CD8-positive, alpha-beta T cell (primary cell): ENCODE measurements at regions of chr4 and their contacts with region 1.

Region 1: DNA sequence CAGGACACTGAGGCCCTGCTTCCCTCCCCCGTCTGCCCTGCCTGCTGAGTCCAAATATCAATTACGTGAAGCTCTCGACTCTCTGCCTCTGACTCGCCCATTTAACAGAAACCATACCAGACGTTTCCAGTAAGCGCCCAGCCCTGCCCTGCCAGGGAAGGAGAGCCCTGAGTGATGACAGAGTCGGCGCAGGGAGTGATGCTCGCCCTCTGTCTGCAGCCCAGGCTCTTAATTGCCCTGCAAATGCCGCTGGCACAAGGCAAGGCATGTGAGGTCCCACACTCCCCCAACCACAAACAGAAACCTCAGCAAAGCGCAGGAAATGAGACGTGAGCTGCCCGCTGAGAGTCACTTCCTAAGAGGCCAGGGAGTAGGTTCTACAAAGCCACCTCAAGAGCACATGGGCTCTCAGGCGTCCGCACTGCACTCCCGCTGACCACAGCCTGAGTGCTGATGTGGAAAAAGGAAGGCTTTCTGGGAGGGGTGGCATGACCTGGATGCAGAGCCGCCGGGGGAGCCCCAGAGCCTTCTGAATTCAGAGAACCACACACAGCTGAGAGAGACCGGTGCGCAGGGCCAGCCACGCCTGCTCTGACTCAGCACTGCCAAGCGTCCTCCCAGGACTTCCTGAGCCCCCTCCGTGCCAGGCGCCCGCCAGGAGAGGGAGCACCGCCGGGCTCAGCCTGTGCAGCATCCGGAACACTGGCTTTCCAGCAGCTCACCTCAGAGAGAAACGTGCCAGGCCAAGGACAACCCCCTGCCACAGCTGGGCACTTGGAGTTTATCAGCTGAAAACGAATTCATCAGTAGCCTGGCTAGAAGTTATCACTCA is 5.3 kb downstream of the ZFYVE28 start:
- DNase-seq: peak; percentile 71 to 98 (median 86)
- ATAC-seq: peak; percentile 77
- H3K4me3 ChIP-seq: peak overlapping the region; percentile 25 to 38
- H3K4me3 Mint-ChIP-seq: peak overlapping the region; percentile 73
- H3K27ac ChIP-seq: peak overlapping the region; percentile 87 to 91
- H3K27ac Mint-ChIP-seq: peak overlapping the region; percentile 97
- H3K4me1 ChIP-seq: peaks cover 62% of the 10 kb centered on the region
- H3K4me1 Mint-ChIP-seq: peaks cover 68% of the 10 kb centered on the region
- H3K27me3 ChIP-seq: peaks cover 4 to 7% of the 10 kb centered on the region in 2 experiments
- H3K27me3 Mint-ChIP-seq: peaks cover 4% of the 10 kb centered on the region
- CTCF ChIP-seq: peak; percentile 31

Region 2: DNA sequence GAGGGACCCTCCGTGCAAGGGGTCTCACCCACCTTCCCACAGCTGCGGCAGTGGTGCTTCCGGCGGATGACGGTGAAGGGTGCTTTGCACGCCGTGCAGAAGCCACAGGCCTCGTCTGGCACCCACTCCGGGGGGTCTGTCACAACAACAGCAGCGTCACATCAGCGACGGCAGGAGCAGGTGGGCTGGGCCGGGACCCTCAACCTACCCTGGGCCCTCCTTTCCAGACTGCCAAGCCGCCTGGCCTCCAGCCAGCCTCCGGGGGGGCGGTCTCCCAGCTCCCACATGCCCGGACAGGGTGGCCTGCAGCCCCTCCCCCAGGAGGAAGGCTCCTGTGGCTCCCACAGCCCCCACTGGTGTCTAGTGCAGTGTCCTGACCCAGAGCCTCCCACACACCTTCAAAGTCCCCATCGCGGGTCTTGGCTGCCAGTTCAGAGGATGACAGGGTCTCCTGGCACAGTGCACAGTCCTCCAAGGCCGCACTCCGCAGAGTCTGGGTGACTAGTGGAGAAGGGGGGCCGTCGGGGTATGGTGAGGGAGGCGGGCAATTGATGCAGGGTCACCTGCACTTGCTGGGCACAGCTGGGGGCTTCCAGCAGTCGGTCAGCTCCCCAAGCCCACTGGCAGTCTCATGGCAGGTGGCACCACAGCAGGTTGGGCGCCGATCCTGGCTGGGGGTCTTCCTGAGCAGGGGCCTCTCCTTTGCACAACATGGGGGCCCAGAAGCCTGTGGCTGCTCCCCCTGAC is 141.6 kb before region 1 on chr4:
- CTCF ChIA-PET with region 1: no interaction called
- POLR2A ChIA-PET with region 1: no interaction called
- intact Hi-C with region 1: no loop called
- DNase-seq: peak in 1 of 9 experiments; percentile 16
- ATAC-seq: no peak
- H3K4me3 ChIP-seq: no peak overlapping the region
- H3K4me3 Mint-ChIP-seq: no peak overlapping the region
- H3K27ac ChIP-seq: no peak overlapping the region
- H3K27ac Mint-ChIP-seq: no peak overlapping the region
- H3K4me1 ChIP-seq: no peaks in the 10 kb centered on the region
- H3K4me1 Mint-ChIP-seq: peaks cover 2% of the 10 kb centered on the region
- H3K27me3 ChIP-seq: no peaks in the 10 kb centered on the region
- H3K27me3 Mint-ChIP-seq: no peaks in the 10 kb centered on the region
- CTCF ChIP-seq: no peak

Region 3: GRCh38 chr4:2281575-2282343 is 131.3 kb before region 1 on chr4:
- CTCF ChIA-PET with region 1: interaction called, 3 read pairs
- POLR2A ChIA-PET with region 1: interaction called, 10 read pairs
- intact Hi-C with region 1: loop called (anchors 1 to 2 kb)
- DNase-seq: peak; percentile 73 to 98 (median 85)
- ATAC-seq: peak; percentile 83
- H3K4me3 ChIP-seq: peak overlapping the region in 1 of 2 experiments; percentile 30
- H3K4me3 Mint-ChIP-seq: peak overlapping the region; percentile 78
- H3K27ac ChIP-seq: peak overlapping the region; percentile 67 to 94
- H3K27ac Mint-ChIP-seq: peak overlapping the region; percentile 99
- H3K4me1 ChIP-seq: peaks cover 46% of the 10 kb centered on the region
- H3K4me1 Mint-ChIP-seq: peaks cover 41% of the 10 kb centered on the region
- H3K27me3 ChIP-seq: no peaks in the 10 kb centered on the region
- H3K27me3 Mint-ChIP-seq: no peaks in the 10 kb centered on the region
- CTCF ChIP-seq: peak; percentile 72

Region 4: DNA sequence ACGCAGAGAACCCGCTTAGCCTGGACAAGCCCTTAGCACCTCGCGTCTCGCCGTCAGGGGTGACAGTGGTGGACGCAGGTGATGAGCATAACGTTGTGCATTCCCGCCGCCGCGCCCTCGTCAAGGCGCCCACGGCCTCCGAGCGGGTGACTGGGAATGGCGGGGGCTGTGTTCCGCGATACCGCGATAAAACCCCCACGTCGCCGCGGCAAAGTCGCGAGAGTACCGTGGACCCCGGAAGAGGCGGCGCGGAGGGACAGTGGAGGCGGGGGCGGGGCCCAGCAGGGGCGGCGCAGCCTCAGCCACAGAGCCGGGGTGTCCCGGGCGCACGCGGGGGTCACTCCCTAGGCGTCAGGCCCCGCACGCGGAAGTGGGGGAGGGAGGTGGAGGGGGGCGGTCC is 48.4 kb before region 1 on chr4:
- CTCF ChIA-PET with region 1: no interaction called
- POLR2A ChIA-PET with region 1: interaction called, 3 read pairs
- intact Hi-C with region 1: loop called (anchors 2 kb)
- DNase-seq: peak; percentile 32 to 83 (median 60)
- ATAC-seq: peak; percentile 85
- H3K4me3 ChIP-seq: peak overlapping the region; percentile 69 to 74
- H3K4me3 Mint-ChIP-seq: peak overlapping the region; percentile 75
- H3K27ac ChIP-seq: peak overlapping the region; percentile 52 to 65
- H3K27ac Mint-ChIP-seq: peak overlapping the region; percentile 83
- H3K4me1 ChIP-seq: peaks cover 19% of the 10 kb centered on the region
- H3K4me1 Mint-ChIP-seq: peaks cover 13% of the 10 kb centered on the region
- H3K27me3 ChIP-seq: no peaks in the 10 kb centered on the region
- H3K27me3 Mint-ChIP-seq: no peaks in the 10 kb centered on the region
- CTCF ChIP-seq: no peak

Region 5: GRCh38 chr4:2402029-2402428 is 11.1 kb before region 1 on chr4:
- CTCF ChIA-PET with region 1: interaction called, 6 read pairs
- POLR2A ChIA-PET with region 1: interaction called, 20 read pairs
- intact Hi-C with region 1: no loop called
- DNase-seq: peak in 5 of 9 experiments; percentile 24 to 49 (median 30)
- ATAC-seq: peak; percentile 76
- H3K4me3 ChIP-seq: peak overlapping the region in 1 of 2 experiments; percentile 56
- H3K4me3 Mint-ChIP-seq: peak overlapping the region; percentile 80
- H3K27ac ChIP-seq: no peak overlapping the region
- H3K27ac Mint-ChIP-seq: no peak overlapping the region
- H3K4me1 ChIP-seq: peaks cover 17% of the 10 kb centered on the region
- H3K4me1 Mint-ChIP-seq: peaks cover 26% of the 10 kb centered on the region
- H3K27me3 ChIP-seq: no peaks in the 10 kb centered on the region
- H3K27me3 Mint-ChIP-seq: peaks cover 8% of the 10 kb centered on the region
- CTCF ChIP-seq: no peak